Activated CD4-positive, alpha-beta T cell treated with anti-CD3 and anti-CD28 coated beads for 36 hours (primary cell): ENCODE measurements at regions of chr5 and their contacts with region 1.

Region 1: DNA sequence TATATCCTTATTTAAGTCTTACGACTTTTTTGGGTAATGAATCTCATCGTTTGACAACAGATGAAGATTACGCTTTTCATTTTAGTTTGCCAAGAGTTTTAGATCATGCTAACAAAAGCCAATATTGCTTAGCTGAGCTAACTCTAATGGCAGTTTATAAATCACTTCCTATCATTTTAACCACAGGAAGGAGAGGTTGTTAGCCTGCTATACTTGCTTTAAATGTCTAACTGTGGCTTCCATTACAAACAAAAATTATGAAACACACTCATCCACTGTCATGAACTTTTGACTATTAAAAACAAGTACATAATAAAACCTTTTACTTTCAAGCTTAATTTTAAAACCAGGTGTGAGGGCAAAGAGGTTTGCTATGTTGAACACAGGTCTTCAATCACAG is 53.7 kb upstream of the ANKH start:
- DNase-seq: no peak
- ATAC-seq: peak; percentile 19
- H3K4me3 Mint-ChIP-seq: peak overlapping the region; percentile 42
- H3K27ac Mint-ChIP-seq: peak overlapping the region; percentile 89
- H3K4me1 Mint-ChIP-seq: peaks cover 60% of the 10 kb centered on the region
- H3K27me3 Mint-ChIP-seq: no peaks in the 10 kb centered on the region

Region 2: DNA sequence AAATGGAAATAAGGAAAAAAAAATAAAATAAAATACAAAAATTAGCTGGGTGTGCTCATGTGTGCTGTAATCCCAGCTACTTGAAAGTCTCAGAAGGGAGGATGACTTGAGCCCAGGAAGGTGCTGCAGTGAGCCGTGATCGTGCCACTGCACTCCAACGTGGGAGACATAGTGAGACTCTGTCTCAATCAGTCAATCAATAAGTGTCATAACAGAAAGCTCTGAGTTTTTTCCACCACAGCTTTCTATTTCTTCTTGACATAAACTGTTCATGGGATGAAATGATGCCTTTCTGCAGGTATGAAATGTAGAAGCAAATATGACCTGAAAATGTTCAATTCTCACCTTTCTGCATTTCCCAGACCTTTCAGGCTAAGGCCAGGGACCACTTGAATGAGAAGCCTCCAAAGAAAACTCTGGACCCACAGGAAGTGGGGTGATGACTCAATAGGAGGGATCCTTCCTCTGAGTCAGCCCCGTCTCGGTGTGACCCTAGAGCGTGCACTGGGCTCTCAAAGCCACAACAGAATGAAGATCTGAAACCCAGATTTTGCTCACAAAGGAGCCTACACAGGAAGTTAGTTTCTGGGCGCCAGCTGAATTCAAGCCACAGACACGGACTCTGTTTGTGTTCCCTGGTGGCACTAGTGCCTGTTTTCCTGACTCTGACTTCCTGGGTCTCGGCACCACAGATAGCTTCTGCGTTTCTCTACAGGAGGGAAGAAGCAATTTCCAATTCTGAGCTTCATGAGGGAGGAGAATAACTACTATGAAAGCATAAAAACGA is 115.8 kb before region 1 on chr5:
- CTCF ChIA-PET with region 1: no interaction called
- POLR2A ChIA-PET with region 1: no interaction called
- intact Hi-C with region 1: loop called (anchors 1 to 5 kb)
- DNase-seq: peak; percentile 87
- ATAC-seq: peak; percentile 96
- H3K4me3 Mint-ChIP-seq: peak overlapping the region; percentile 55
- H3K27ac Mint-ChIP-seq: peak overlapping the region; percentile 71
- H3K4me1 Mint-ChIP-seq: peaks cover 51% of the 10 kb centered on the region
- H3K27me3 Mint-ChIP-seq: no peaks in the 10 kb centered on the region

Region 3: GRCh38 chr5:14816999-14817761 is 108.1 kb before region 1 on chr5:
- CTCF ChIA-PET with region 1: no interaction called
- POLR2A ChIA-PET with region 1: no interaction called
- intact Hi-C with region 1: loop called (anchors 2 to 5 kb)
- DNase-seq: peak; percentile 76
- ATAC-seq: peak; percentile 87
- H3K4me3 Mint-ChIP-seq: peak overlapping the region; percentile 1
- H3K27ac Mint-ChIP-seq: peak overlapping the region; percentile 75
- H3K4me1 Mint-ChIP-seq: peaks cover 83% of the 10 kb centered on the region
- H3K27me3 Mint-ChIP-seq: no peaks in the 10 kb centered on the region

Region 4: DNA sequence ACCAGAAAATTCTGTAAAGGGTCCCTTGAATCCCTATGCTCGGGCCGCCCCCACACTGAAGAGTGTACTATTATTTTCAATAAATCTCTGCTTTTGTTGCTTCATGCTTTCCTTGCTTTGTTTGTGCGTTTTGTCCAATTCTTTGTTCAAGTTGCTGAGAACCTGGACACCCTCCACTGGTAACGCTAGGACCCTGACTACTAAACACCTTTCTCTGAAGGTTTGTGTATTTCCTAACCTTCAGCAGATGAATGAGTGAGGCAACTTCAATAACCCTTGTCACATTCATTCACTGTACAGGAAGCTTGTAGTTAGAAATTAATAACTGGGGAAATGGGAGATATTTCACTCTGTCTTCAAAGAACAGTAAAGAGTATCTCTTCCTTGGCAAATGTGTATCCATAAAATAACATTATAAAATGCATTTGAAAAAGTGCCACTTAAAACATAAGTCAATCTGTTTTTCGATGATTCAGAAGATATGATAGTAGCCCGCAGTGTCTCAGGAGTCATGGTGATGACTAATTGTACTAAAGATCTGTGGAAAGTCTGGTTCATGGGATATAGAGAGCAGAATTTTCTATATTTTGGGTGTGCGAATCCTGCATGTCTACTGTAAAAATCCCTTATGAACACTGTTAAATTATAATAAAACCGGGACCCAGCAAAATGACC is 10.6 kb before region 1 on chr5:
- CTCF ChIA-PET with region 1: interaction called, 3 read pairs
- POLR2A ChIA-PET with region 1: no interaction called
- intact Hi-C with region 1: loop called (anchors 1 kb)
- DNase-seq: no peak
- ATAC-seq: peak; percentile 93
- H3K4me3 Mint-ChIP-seq: no peak overlapping the region
- H3K27ac Mint-ChIP-seq: no peak overlapping the region
- H3K4me1 Mint-ChIP-seq: peaks cover 22% of the 10 kb centered on the region
- H3K27me3 Mint-ChIP-seq: no peaks in the 10 kb centered on the region